Activated B cell treated with CpG ODN at 0.5 μM for 24 hours (primary cell): ENCODE measurements at regions of chrX and their contacts with region 1.

Region 1: GRCh38 chrX:118807151-118808017 is 16.2 kb upstream of the ZCCHC12 start:
- DNase-seq: peak; percentile 30
- ATAC-seq: peak; percentile 79
- H3K4me3 Mint-ChIP-seq: no peak overlapping the region
- H3K27ac Mint-ChIP-seq: no peak overlapping the region
- H3K4me1 Mint-ChIP-seq: no peaks in the 10 kb centered on the region
- H3K27me3 Mint-ChIP-seq: peaks cover 2% of the 10 kb centered on the region
- CTCF ChIP-seq: no peak

Region 2: DNA sequence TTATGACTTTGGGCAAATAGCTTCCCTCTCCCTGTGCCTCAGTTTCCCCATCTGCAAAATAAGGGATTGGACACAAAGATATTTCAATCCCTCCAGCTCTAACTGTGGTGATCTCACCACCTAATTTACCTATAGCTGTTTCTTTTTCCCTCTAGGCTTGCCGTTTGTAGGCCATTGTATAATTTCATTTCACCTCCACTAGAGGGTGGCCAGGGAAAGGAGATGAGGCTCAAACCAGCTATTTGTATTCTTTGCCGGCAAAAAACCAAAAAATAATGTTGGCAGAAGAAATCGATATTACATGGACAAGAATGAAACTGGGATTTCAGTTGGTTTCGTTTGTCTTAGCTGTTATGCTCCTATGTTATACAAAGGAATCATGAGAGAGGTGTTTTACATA is 347.9 kb before region 1 on chrX:
- CTCF ChIA-PET with region 1: interaction called, 4 read pairs
- POLR2A ChIA-PET with region 1: no interaction called
- intact Hi-C with region 1: loop called (anchors 5 kb)
- DNase-seq: no peak
- ATAC-seq: peak; percentile 37
- H3K4me3 Mint-ChIP-seq: no peak overlapping the region
- H3K27ac Mint-ChIP-seq: no peak overlapping the region
- H3K4me1 Mint-ChIP-seq: no peaks in the 10 kb centered on the region
- H3K27me3 Mint-ChIP-seq: no peaks in the 10 kb centered on the region
- CTCF ChIP-seq: no peak

Region 3: DNA sequence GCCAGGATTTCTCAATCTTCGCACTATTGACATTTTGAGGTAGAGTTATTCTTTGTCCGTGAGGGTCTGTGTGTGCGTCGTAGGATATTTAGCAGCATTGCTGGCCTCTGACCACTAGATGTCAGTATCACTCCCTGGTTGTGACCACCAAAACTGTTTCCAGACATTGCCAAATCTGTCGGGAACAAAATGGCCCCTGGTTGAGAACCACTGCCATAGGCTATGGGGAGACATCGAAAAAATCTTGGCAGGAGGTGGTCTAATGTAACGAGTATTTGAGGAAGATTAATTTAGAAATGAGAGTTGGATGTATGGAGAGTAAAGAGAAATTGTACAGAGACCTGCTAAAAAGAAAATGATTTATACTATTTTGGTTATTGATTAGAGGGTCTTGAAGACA is 203.4 kb before region 1 on chrX:
- CTCF ChIA-PET with region 1: interaction called, 26 read pairs
- POLR2A ChIA-PET with region 1: interaction called, 5 read pairs
- intact Hi-C with region 1: loop called (anchors 1 kb)
- DNase-seq: no peak
- ATAC-seq: peak; percentile 62
- H3K4me3 Mint-ChIP-seq: no peak overlapping the region
- H3K27ac Mint-ChIP-seq: peak overlapping the region; percentile 70
- H3K4me1 Mint-ChIP-seq: peaks cover 9% of the 10 kb centered on the region
- H3K27me3 Mint-ChIP-seq: no peaks in the 10 kb centered on the region
- CTCF ChIP-seq: no peak

Region 4: DNA sequence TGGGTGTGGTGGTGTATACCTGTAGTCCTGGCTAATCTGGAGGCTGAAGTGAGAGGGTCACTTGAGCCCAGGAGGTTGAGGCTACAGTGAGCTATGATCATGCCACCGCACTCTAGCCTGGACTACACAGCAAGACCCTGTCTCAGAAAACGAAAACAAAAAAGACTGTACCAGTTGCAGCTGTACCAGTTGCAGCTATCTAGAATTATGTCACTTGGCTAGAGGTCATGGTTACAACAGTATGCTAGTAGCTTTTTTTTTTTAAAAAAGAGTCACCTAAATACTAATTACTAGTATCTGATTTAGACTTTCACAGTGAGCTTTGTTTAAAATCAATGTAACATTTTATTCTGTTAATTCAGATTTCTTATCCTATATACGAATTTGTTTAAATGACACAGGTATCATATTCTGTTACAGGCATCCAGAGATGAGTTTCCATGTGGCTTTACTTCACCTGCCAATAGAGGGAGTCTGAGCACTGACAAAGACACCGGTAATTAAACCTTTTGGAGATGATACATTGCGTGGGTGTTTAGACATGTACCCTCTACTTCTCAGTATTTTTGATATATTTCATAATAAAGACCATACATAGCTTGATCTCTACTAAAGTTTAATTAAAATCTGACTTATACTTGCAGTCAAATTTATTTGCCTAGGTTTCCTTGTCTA is 180.2 kb before region 1 on chrX:
- CTCF ChIA-PET with region 1: interaction called, 36 read pairs
- POLR2A ChIA-PET with region 1: no interaction called
- intact Hi-C with region 1: loop called (anchors 1 kb)
- DNase-seq: no peak
- ATAC-seq: no peak
- H3K4me3 Mint-ChIP-seq: no peak overlapping the region
- H3K27ac Mint-ChIP-seq: no peak overlapping the region
- H3K4me1 Mint-ChIP-seq: peaks cover 13% of the 10 kb centered on the region
- H3K27me3 Mint-ChIP-seq: no peaks in the 10 kb centered on the region
- CTCF ChIP-seq: no peak

Region 5: GRCh38 chrX:118644378-118644777 is 163.0 kb before region 1 on chrX:
- CTCF ChIA-PET with region 1: interaction called, 10 read pairs
- POLR2A ChIA-PET with region 1: no interaction called
- intact Hi-C with region 1: loop called (anchors 1 kb)
- DNase-seq: no peak
- ATAC-seq: no peak
- H3K4me3 Mint-ChIP-seq: no peak overlapping the region
- H3K27ac Mint-ChIP-seq: no peak overlapping the region
- H3K4me1 Mint-ChIP-seq: no peaks in the 10 kb centered on the region
- H3K27me3 Mint-ChIP-seq: no peaks in the 10 kb centered on the region
- CTCF ChIP-seq: no peak

Region 6: DNA sequence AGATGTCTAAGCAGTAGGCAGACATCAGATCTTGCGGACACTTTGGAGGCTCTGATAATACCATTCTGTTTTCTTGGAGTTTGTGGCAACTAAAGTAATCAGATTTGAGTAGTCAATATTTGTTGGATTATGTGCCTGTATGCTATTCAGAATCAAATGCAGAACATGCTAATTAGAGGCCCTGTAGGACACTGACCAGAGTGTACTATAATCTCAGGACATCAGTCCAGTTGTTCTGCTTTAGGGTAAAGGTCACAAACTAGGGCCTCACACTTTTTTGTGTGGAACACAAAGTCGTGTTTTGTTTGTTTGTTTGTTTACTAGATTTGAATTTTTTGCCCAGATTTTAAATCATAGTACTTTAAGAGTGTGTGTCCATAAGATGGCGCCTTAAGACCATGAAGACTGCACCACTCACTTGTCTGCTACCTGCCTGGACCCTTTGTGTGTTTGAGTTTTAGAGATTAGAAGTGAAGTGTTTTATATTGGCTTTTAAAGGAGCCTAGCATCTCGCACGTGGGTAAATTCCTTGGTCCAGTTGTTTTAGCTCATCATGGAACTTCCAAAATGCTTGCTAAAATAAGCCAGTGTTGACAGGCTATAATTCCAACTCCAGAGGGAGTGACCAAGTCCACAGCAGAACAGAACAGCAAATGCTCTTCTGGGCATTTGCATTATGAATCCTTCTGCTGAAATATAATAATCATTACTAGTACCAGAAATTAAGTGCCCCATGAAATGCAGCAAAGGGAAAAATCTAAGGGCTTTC is 45.3 kb before region 1 on chrX:
- CTCF ChIA-PET with region 1: no interaction called
- POLR2A ChIA-PET with region 1: no interaction called
- intact Hi-C with region 1: loop called (anchors 2 kb)
- DNase-seq: no peak
- ATAC-seq: no peak
- H3K4me3 Mint-ChIP-seq: no peak overlapping the region
- H3K27ac Mint-ChIP-seq: no peak overlapping the region
- H3K4me1 Mint-ChIP-seq: peaks cover 9% of the 10 kb centered on the region
- H3K27me3 Mint-ChIP-seq: no peaks in the 10 kb centered on the region
- CTCF ChIP-seq: no peak